ENCODE measurements at regions of chr21 and their contacts with region 1.

Region 1: GRCh38 chr21:45954261-45954660 is 27.3 kb upstream of the COL6A1 start:
- DNase-seq: no peak
- CTCF ChIP-seq: no peak

Region 2: DNA sequence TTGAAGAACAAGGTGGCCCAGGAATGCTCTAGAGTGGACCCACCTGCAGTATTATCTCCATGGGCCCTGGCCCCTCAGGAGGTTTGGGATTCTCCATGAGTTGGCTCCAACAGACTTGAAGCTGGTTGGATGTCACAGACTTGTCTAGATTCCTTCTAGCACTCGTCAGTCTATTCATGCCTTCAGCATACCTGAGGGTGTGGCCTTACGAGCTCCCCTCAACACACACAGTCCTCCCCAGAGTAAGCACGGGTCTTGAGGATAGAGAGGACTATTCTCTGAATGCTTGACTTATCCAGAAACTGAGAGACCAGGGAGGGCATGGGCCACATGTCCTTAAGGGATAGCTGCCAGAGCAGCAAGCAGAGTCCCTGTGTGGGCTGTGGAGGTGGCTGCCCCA is 18.6 kb before region 1 on chr21:
- CTCF ChIA-PET with region 1: no interaction called
- POLR2A ChIA-PET with region 1: no interaction called
- DNase-seq: no peak
- CTCF ChIP-seq: no peak

Region 3: DNA sequence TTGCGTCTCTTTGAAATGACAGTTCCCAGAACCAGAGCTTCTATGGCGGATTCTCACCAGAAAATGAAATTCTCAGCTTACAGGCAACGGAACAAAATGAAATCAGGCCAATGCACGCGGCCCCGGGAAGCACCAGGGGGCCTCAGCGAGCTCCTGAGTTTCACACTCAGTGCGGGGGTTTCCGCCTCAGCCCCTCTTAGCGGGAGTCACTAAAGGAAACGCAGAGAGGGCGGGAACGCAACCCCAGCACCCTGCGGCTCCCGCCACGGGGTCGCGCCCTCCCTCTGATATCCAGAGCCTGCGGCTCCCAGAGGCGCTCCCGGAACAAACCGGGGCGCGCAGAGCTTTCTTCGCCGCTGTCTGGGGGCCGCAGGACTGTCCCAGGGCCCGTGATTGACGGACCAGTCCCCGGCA is 19.4 kb after region 1 on chr21:
- CTCF ChIA-PET with region 1: interaction called, 10 read pairs
- POLR2A ChIA-PET with region 1: no interaction called
- DNase-seq: peak; percentile 84
- CTCF ChIP-seq: peak; percentile 75

Measured in GM10248 (cell line).